ENCODE measurements at regions of chr17 and their contacts with region 1.

Region 1: DNA sequence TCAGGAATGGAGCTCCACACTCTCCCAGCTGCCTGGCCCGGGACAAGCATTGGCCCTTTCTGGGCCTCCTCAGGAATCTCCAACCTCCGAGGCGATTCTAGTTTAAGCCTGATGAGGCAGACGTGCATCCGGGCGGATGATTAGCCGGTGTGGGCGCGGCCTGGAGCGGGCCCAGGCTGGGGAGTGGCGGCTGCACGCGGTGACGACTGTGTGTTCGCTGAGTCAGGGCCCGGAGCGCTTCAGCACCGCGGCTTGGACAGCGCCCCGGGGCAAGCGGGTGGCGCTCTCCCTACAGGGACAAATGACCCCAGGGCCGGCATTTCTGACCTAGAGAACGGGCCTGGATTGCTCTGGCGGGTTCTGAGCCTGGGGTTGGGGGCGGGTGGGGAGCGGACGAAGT is 22.6 kb upstream of the ZNHIT3 start:
- DNase-seq: peak; percentile 67
- ATAC-seq: peak; percentile 100
- H3K4me3 ChIP-seq: no peak overlapping the region
- H3K27ac ChIP-seq: no peak overlapping the region
- H3K4me1 ChIP-seq: no peaks in the 10 kb centered on the region
- H3K27me3 ChIP-seq: peaks cover 5% of the 10 kb centered on the region
- CTCF ChIP-seq: peak; percentile 18; the same call in 1 of the 2 replicates
- POLR2A ChIP-seq: no peak
- RAD21 ChIP-seq: no peak

Region 2: DNA sequence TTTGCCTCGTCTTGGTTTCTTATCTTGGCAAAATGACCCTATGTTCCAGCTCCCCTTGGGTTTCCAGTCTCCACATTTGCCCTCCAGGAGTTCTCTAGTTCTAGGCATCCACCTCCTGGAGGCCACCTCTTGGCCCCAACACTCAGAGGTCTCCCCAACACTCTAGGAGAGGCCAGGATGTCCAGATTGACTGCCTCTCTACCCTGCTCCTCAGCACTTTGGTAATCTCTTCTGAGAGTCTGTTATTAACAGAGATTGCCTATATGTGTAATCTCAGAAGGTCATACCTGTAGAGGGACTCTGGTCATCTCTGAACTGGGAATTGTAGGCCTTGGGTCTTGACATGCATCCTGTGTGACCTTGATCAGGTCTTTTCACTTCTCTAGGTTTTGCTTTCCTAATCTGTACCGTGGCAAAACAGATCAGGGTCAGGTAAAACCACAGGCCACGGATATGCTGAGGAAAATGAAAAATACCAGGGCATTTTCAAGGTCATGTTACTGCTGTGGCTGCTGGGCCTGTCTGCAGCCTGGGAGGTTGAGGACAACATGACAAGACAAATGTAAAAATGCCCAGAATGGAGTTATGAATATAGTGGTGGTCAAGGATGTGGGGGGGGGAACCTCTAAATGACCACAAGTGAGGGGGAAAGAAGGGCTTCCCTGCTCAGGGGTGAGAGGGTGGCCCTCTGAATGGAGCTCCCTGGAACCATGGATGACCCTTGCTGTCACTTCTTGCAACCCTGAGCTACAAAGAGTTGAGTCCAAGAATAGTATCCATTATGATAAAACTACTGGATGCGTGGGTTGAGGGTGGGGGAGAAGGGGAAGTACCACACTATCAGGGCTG is 258.1 kb before region 1 on chr17:
- CTCF ChIA-PET with region 1: no interaction called
- POLR2A ChIA-PET with region 1: no interaction called
- dilution Hi-C with region 1: no loop called
- in situ Hi-C with region 1: loop called (anchors 25 kb)
- intact Hi-C with region 1: no loop called
- DNase-seq: no peak
- ATAC-seq: no peak
- H3K4me3 ChIP-seq: no peak overlapping the region
- H3K27ac ChIP-seq: no peak overlapping the region
- H3K4me1 ChIP-seq: no peaks in the 10 kb centered on the region
- H3K27me3 ChIP-seq: peaks cover 3% of the 10 kb centered on the region; the same call in 1 of the 2 replicates
- CTCF ChIP-seq: no peak
- POLR2A ChIP-seq: no peak
- RAD21 ChIP-seq: no peak

Region 3: GRCh38 chr17:36972186-36972700 is 508.3 kb after region 1 on chr17:
- CTCF ChIA-PET with region 1: no interaction called
- POLR2A ChIA-PET with region 1: no interaction called
- dilution Hi-C with region 1: no loop called
- in situ Hi-C with region 1: no loop called
- intact Hi-C with region 1: no loop called
- DNase-seq: no peak
- ATAC-seq: no peak
- H3K4me3 ChIP-seq: no peak overlapping the region
- H3K27ac ChIP-seq: no peak overlapping the region
- H3K4me1 ChIP-seq: peaks cover 2% of the 10 kb centered on the region; the same call in 1 of the 2 replicates
- H3K27me3 ChIP-seq: no peaks in the 10 kb centered on the region
- CTCF ChIP-seq: no peak
- POLR2A ChIP-seq: no peak
- RAD21 ChIP-seq: no peak

Measured in IMR-90 (cell line).